ENCODE measurements at regions of chr4 and their contacts with region 1.

Region 1: DNA sequence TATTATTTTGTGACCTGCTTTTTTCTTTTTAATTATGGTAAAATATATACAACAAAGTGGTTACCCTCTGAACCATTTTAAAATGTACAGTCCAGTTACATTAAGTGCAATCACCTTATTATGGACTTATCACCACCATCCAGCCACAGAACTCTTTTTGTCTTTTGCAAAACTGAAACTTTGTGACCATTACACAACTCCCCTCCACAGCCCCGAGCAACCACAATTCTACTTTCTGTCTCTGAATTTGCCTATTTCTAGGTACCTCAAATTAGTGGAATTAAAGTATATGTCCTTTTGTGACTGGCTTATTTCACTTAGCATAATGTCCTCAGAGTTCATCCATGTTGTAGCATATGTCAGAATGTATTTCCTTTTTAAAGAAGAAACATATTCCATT is 39.3 kb upstream of the WWC2 start:
- DNase-seq: no peak
- ATAC-seq: no peak
- H3K4me3 ChIP-seq: no peak overlapping the region
- H3K27ac ChIP-seq: no peak overlapping the region
- H3K4me1 ChIP-seq: no peaks in the 10 kb centered on the region
- H3K27me3 ChIP-seq: no peaks in the 10 kb centered on the region
- CTCF ChIP-seq: no peak

Region 2: GRCh38 chr4:182955411-182955810 is 104.4 kb before region 1 on chr4:
- CTCF ChIA-PET with region 1: no interaction called
- POLR2A ChIA-PET with region 1: no interaction called
- in situ Hi-C with region 1: no loop called
- intact Hi-C with region 1: loop called (anchors 10 kb)
- DNase-seq: no peak
- ATAC-seq: no peak
- H3K4me3 ChIP-seq: no peak overlapping the region
- H3K27ac ChIP-seq: no peak overlapping the region
- H3K4me1 ChIP-seq: no peaks in the 10 kb centered on the region
- H3K27me3 ChIP-seq: no peaks in the 10 kb centered on the region
- CTCF ChIP-seq: no peak

Measured in Panc1 (cell line).